Heart right ventricle (tissue), 16 donors: ENCODE measurements at regions of chr16 and their contacts with region 1.

Region 1: DNA sequence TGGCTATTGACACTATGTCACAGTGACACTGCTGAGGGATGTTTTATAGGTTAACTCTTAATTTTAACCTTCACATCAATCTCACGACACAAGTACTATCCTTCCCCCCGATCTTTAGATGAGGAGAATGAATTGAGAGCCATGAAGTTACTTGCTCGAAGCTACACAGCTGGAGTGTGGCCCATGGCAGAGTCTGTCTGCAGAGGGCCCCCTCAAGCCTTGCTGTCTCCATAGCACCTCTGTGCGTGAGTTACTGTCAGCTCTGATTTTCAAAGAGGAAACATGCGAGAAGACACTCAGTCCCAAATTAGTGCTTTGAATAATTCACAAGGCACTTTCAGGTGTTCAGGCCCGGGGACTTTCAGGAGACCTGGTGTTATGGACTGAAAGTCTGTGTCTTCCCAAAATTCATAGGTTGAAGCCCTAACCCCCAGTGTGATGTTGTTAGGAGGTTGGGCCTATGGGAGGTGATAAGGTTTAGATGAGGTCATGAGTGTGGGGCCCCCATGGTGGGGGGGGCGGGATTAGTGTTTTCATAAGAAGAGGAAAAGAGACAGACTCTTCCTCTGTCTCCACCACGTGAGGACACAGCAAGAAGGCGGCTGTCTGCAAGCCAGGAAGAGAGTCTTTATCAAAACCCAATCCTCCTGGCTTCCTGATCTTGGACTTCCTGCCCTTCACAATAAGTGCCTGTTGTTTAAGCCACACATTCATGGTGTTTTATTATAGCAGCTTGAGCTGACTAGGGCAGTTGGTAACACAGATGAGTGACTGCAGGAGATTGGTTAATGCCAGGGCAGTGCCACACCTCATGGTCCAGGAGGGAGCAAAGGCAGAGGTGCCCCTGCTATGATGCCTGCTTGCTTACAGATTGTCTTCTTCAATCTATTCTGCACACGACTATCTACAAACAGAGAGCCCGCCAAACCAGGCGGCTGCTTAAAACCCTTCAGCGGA is 281.8 kb downstream of the HAPSTR1 start:
- DNase-seq: no peak
- ATAC-seq: peak in 3 of 8 donors; percentile 19 to 61 (median 52)
- H3K4me3 ChIP-seq: no peak overlapping the region
- H3K27ac ChIP-seq: peak overlapping the region in 2 of 10 donors; percentile 26 to 31
- H3K4me1 ChIP-seq: peaks cover 0 to 26% (median 12%) of the 10 kb centered on the region in 9 donors
- H3K27me3 ChIP-seq: no peaks in the 10 kb centered on the region
- CTCF ChIP-seq: peak in 2 of 9 donors; percentile 28 to 43

Region 2: DNA sequence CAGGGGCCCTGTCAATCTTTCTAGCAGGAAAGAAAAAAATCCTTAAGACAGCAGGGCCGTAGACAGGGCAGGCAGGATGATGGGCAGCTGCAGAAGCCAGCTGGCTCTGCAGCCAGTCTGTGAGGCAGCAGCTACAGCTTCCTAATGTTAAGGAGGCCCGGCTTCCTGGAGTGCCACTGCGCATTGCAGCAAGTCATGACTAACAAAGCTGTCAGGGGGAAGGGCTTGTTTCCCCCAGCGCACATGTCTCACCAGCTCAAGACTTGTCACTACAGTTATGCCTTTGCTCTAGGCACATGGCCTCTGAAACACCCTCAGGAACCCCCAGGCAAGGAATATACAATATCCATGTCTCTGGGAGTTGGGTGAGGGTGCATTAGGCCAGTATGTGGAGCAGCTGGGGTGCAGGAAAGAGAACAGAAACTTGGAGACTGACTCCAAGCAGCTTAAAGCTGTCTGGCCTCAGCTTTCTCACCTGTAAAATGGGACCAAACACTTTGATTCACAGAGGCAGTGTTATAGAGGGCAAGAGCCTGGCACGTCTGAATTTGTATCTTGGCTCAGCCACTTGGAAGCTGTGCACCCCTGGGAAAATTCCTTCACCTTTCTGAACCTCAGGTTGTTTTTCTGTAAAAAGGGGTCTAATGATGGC is 61.8 kb before region 1 on chr16:
- intact Hi-C with region 1: loop called in 1 of 10 experiments (anchors 5 kb)
- DNase-seq: no peak
- ATAC-seq: peak in 2 of 8 donors; percentile 52 to 75
- H3K4me3 ChIP-seq: no peak overlapping the region
- H3K27ac ChIP-seq: no peak overlapping the region
- H3K4me1 ChIP-seq: peaks cover 0 to 16% (median 0%) of the 10 kb centered on the region in 9 donors
- H3K27me3 ChIP-seq: no peaks in the 10 kb centered on the region
- CTCF ChIP-seq: no peak

Region 3: GRCh38 chr16:9422769-9423513 is 49.7 kb after region 1 on chr16:
- intact Hi-C with region 1: loop called in 1 of 10 experiments (anchors 2 kb)
- DNase-seq: peak in 1 of 2 donors; percentile 40
- ATAC-seq: peak; percentile 49 to 89 (median 84)
- H3K4me3 ChIP-seq: no peak overlapping the region
- H3K27ac ChIP-seq: peak overlapping the region in 4 of 10 donors; percentile 14 to 57 (median 48)
- H3K4me1 ChIP-seq: peaks cover 0 to 11% (median 0%) of the 10 kb centered on the region in 9 donors
- H3K27me3 ChIP-seq: no peaks in the 10 kb centered on the region
- CTCF ChIP-seq: no peak

Region 4: DNA sequence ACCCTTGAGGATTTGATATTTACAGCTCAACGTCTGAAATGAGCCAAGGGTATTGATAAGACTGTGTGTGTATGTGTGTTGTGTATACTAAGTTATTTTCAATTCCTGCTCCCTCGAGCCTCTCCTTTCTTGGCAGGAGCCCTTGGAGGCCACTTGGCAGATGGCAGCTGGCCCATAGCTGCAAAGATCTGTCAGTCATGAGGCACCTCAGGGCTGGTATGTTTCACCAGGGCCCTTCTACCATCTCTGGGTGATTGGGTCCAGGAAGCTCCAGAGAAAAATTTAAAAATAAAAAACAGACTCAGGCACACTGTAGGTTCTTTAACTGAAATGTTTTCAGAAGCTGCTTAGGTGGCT is 74.0 kb after region 1 on chr16:
- intact Hi-C with region 1: loop called in 2 of 10 experiments (anchors 1 kb)
- DNase-seq: peak; percentile 73
- ATAC-seq: peak; percentile 83 to 97 (median 92)
- H3K4me3 ChIP-seq: no peak overlapping the region
- H3K27ac ChIP-seq: peak overlapping the region; percentile 40 to 80 (median 64)
- H3K4me1 ChIP-seq: peaks cover 0 to 16% (median 0%) of the 10 kb centered on the region in 9 donors
- H3K27me3 ChIP-seq: no peaks in the 10 kb centered on the region
- CTCF ChIP-seq: no peak

Region 5: DNA sequence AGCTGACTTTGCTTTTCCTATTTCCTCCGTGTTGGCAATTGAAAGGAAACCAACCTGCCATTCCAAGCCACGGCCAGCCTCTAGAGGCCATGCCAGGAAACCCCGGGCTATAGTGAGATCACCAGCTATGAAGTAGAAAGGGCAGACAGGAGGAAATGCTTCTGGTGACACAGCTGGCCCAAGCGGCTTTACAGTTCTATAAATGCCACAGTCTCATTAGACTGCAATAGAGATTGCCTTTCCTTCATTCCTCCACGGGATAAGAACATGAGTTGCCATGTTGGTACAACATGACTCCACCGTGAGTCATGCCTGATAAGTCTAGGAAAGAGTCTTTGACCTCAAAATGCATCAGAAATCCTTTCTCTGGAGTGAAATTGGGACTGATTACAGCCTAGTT is 424.1 kb after region 1 on chr16:
- intact Hi-C with region 1: loop called in 1 of 10 experiments (anchors 10 kb)
- DNase-seq: peak; percentile 21 to 40
- ATAC-seq: peak; percentile 61 to 94 (median 86)
- H3K4me3 ChIP-seq: peak overlapping the region in 6 of 10 donors; percentile 3 to 31 (median 20)
- H3K27ac ChIP-seq: peak overlapping the region; percentile 48 to 95 (median 80)
- H3K4me1 ChIP-seq: peaks cover 0 to 26% (median 9%) of the 10 kb centered on the region in 9 donors
- H3K27me3 ChIP-seq: no peaks in the 10 kb centered on the region
- CTCF ChIP-seq: peak in 1 of 9 donors; percentile 5